ENCODE measurements at regions of chr3 and their contacts with region 1.

Region 1: DNA sequence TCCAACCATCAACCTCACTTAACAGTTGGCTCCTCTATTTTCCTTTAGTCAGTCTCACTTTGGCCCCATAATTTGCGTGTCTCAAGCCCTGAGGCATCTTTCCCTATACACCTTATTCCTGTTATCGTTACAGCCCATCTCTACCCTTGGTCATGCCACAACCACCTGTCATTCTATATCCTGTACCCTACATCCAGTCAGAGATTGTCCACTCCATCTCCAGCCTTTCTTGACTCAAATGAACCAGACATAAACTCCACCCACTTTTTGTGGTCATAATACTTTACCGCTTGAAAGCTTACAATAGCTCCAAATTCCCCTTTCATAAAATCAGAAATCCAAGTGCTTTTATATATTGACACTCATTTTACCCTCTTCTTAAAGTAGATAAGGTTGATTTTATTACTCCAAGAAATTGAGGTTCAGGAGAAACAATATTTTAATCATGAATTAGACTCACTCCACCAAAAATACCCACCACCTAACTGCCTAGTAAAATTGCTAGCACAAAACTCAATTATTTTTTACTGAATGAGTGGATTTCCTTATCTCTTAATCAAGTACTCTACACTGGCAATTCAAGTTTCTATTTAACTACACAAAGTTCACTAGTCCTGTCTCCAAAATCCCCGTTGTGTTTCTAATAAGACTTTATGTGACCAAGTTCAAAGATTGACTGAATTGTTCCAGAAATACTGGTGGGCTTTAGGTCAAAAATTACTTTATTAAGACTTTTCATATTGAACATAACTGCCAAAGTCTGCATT is 9.1 kb downstream of the CCR4 start:
- DNase-seq: peak; percentile 54
- H3K4me3 Mint-ChIP-seq: peak overlapping the region; percentile 41
- H3K27ac Mint-ChIP-seq: peak overlapping the region; percentile 97
- H3K4me1 Mint-ChIP-seq: peaks cover 84% of the 10 kb centered on the region
- H3K27me3 Mint-ChIP-seq: no peaks in the 10 kb centered on the region

Region 2: DNA sequence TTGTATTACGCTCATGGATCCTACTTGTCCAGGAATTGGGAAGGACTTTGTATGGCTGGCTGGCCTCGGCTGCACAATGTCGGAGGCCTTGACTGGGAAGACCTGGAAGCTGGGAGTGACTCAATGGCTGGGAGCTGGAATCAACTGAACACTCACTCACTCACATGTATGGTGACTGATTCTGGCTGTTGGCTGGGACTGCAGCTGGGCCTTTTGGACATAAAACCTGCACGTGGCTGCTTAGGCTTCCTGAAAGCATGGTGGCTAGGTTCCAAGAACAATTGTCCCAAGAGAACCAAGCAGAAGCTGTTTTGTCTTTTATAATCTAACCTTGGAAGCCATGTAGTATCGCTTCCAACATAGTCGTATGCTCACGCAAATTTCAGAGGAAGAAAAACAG is 760.1 kb before region 1 on chr3:
- CTCF ChIA-PET with region 1: no interaction called
- POLR2A ChIA-PET with region 1: no interaction called
- intact Hi-C with region 1: no loop called
- DNase-seq: no peak
- H3K4me3 Mint-ChIP-seq: no peak overlapping the region
- H3K27ac Mint-ChIP-seq: no peak overlapping the region
- H3K4me1 Mint-ChIP-seq: no peaks in the 10 kb centered on the region
- H3K27me3 Mint-ChIP-seq: peaks cover 4% of the 10 kb centered on the region

Region 3: GRCh38 chr3:32973982-32974381 is 13.4 kb after region 1 on chr3:
- CTCF ChIA-PET with region 1: no interaction called
- POLR2A ChIA-PET with region 1: interaction called, 5 read pairs
- intact Hi-C with region 1: loop called (anchors 1 kb)
- DNase-seq: peak; percentile 54
- H3K4me3 Mint-ChIP-seq: no peak overlapping the region
- H3K27ac Mint-ChIP-seq: peak overlapping the region; percentile 78
- H3K4me1 Mint-ChIP-seq: peaks cover 56% of the 10 kb centered on the region
- H3K27me3 Mint-ChIP-seq: no peaks in the 10 kb centered on the region

Region 4: DNA sequence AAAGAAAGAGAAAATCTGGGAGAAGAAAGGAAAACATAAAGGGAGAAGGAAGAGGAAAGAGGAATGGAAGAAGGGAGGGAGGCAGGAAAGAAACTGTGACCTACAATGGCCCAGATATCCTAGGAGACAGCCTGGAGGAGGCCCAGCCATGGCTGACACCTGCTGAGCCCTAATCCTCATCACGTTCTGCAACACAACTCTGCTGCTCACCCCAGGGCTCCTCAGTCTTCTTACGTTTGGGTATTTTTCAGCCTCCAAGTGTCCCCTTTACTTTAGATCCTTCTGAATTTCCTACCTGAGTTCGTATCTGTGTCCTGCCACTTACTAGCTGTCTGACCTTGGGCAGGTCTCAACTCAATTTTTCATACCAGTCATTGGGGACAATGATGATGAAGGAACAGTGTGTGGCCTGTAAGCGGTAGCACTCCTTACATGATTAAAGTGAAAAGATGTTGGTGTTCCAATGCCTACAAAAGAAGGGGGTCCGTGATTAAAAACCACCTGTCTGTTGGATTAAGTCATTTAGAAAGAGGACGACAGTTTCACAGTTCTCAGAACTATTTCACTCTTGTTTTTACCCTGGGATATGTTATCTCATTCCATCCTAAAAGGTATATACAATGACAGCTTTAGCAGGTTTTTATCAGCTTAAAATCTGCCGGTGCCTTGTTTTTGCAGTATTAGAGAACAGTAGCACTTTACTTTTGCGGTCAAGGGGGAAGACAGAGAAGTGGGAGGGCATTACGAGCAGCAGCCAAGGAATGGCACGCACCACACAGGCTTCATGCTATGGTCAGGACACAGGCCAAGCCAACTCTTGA is 38.3 kb after region 1 on chr3:
- CTCF ChIA-PET with region 1: interaction called, 4 read pairs
- POLR2A ChIA-PET with region 1: interaction called, 43 read pairs
- intact Hi-C with region 1: no loop called
- DNase-seq: no peak
- H3K4me3 Mint-ChIP-seq: peak overlapping the region; percentile 59
- H3K27ac Mint-ChIP-seq: peak overlapping the region; percentile 86
- H3K4me1 Mint-ChIP-seq: peaks cover 87% of the 10 kb centered on the region
- H3K27me3 Mint-ChIP-seq: no peaks in the 10 kb centered on the region

Region 5: DNA sequence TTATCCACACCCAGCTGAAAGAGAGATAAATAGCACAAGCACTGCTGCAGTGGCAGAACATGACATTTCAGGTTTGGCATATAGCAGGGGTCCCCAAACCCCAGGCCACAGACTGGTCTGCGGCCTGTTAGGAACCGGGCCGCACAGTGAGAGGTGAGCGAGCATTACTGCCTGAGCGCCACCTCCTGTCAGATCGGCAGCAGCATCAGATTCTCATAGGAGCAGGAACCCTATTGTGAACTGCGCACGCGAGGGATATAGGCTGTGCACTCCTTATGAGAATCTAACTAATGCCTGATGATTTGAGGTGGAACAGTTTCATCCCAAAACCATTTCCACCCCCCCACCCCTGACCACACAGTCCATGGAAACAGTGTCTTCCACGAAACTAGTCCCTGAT is 45.5 kb after region 1 on chr3:
- CTCF ChIA-PET with region 1: interaction called, 3 read pairs
- POLR2A ChIA-PET with region 1: interaction called, 12 read pairs
- intact Hi-C with region 1: loop called (anchors 1 kb)
- DNase-seq: peak; percentile 66
- H3K4me3 Mint-ChIP-seq: no peak overlapping the region
- H3K27ac Mint-ChIP-seq: peak overlapping the region; percentile 86
- H3K4me1 Mint-ChIP-seq: peaks cover 72% of the 10 kb centered on the region
- H3K27me3 Mint-ChIP-seq: no peaks in the 10 kb centered on the region

Measured in activated CD4-positive, alpha-beta memory T cell treated with anti-CD3 and anti-CD28 coated beads for 36 hours (primary cell).